Endothelial cell of umbilical vein (primary cell): ENCODE measurements at regions of chr7 and their contacts with region 1.

Region 1: GRCh38 chr7:54672519-54672918 is 86.5 kb downstream of the SEC61G start:
- DNase-seq: no peak
- H3K4me3 ChIP-seq: no peak overlapping the region
- H3K27ac ChIP-seq: no peak overlapping the region
- H3K4me1 ChIP-seq: no peaks in the 10 kb centered on the region
- H3K27me3 ChIP-seq: no peaks in the 10 kb centered on the region
- CTCF ChIP-seq: no peak
- POLR2A ChIP-seq: no peak

Region 2: GRCh38 chr7:54689394-54690049 is 17.0 kb after region 1 on chr7:
- CTCF ChIA-PET with region 1: no interaction called
- POLR2A ChIA-PET with region 1: no interaction called
- dilution Hi-C with region 1: no loop called
- intact Hi-C with region 1: loop called (anchors 1 kb)
- DNase-seq: no peak
- H3K4me3 ChIP-seq: no peak overlapping the region
- H3K27ac ChIP-seq: no peak overlapping the region
- H3K4me1 ChIP-seq: no peaks in the 10 kb centered on the region
- H3K27me3 ChIP-seq: no peaks in the 10 kb centered on the region
- CTCF ChIP-seq: no peak
- POLR2A ChIP-seq: no peak